Activated CD8-positive, alpha-beta memory T cell treated with anti-CD3 and anti-CD28 coated beads, Interleukin-2, amount 10 ng/mL, durations not matched to agents 7 days and 5 days (primary cell): ENCODE measurements at regions of chr19 and their contacts with region 1.

Region 1: GRCh38 chr19:45001087-45001739 is at the start of gene RELB:
- DNase-seq: peak; percentile 95
- ATAC-seq: peak; percentile 75
- H3K4me3 Mint-ChIP-seq: peak within 1 kb of the TSS; percentile 90
- H3K27ac Mint-ChIP-seq: peak within 1 kb of the TSS; percentile 99
- H3K4me1 Mint-ChIP-seq: peaks cover 23% of the 10 kb centered on the region
- H3K27me3 Mint-ChIP-seq: no peaks in the 10 kb centered on the region
- total RNA-seq, gene RELB: 22.4 to 58.8 TPM

Region 2: DNA sequence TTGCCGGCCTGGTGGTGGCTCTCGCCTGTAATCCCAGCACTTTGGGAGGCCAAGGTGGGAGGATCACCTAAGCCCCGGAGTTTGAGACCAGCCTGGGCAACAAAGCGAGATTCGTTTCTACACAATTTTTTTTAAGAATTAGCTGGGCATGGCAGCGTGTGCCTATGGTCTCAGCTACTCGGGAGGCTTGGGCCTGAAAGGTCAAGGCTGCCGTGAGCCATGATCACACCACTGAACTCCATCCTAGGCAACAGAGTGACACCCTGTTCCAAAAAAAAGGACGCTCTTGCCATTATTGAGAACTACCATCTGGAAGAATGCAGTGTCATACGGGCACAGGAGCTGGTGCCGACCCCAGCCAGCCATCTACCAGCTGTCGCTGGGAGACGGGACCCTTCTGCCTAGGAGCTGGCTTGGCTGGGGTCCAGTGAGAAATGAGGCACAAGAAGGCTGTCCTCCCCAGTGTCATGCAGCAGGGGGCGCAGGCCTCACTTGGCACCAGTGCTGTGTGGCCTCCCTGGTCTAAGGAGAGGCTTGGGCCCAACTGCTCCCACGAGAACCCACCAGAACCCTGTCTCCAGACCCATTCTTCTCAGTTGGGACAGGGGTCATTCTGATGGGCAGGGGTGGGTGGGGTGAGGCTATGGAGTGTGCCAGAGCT is 12.2 kb before region 1 on chr19:
- CTCF ChIA-PET with region 1: interaction called, 12 read pairs
- DNase-seq: peak; percentile 75
- ATAC-seq: peak; percentile 88
- H3K4me3 Mint-ChIP-seq: no peak overlapping the region
- H3K27ac Mint-ChIP-seq: no peak overlapping the region
- H3K4me1 Mint-ChIP-seq: peaks cover 4% of the 10 kb centered on the region
- H3K27me3 Mint-ChIP-seq: no peaks in the 10 kb centered on the region

Region 3: DNA sequence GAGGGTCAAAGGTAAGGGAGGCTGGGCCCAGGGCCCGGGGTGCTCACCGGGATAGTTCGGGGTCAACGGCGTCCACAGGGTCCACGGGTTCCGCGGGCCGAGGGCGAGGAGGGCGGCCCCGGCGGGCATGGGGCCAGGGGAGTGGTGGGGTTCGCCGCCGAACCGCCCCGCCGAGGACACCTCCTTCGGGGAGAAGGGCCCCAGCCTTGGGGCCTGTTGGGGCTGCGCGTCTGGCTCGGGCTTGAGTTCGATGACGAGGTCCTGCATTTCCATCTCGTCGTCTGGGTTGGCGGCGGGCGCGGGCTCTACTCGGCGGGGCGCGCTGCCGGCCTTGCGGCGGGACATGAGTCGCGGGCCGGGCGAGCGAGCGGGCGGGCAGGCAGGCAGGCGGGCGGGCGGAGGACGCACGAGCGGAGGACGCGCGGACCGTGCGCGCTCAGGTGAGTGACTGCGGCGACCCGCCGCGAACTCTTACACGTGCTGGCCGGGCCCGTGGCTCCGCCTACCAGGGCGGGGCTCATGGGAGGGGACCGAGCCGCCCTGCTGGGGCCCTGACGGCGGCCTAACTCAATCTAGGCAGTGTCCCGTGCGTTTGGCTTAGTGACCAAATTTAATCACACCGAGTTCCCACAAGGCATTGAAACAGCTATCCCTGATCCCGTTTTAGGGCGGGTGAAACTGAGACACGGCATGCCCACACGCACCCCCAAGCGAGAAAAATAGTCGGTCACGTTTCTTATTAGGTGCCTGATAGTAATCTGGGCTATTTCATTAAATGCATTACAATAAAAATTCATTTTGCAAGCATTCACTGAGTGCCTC is 75.0 kb after region 1 on chr19 and contains the start of gene ZNF296:
- CTCF ChIA-PET with region 1: no interaction called
- DNase-seq: peak; percentile 88
- ATAC-seq: peak; percentile 79
- H3K4me3 Mint-ChIP-seq: peak within 1 kb of the TSS; percentile 82
- H3K27ac Mint-ChIP-seq: peak within 1 kb of the TSS; percentile 88
- H3K4me1 Mint-ChIP-seq: peaks cover 42% of the 10 kb centered on the region
- H3K27me3 Mint-ChIP-seq: no peaks in the 10 kb centered on the region
- total RNA-seq, gene ZNF296: 5.3 to 9.5 TPM